BJ (cell line): ENCODE measurements at regions of chr2 and their contacts with region 1.

Region 1: DNA sequence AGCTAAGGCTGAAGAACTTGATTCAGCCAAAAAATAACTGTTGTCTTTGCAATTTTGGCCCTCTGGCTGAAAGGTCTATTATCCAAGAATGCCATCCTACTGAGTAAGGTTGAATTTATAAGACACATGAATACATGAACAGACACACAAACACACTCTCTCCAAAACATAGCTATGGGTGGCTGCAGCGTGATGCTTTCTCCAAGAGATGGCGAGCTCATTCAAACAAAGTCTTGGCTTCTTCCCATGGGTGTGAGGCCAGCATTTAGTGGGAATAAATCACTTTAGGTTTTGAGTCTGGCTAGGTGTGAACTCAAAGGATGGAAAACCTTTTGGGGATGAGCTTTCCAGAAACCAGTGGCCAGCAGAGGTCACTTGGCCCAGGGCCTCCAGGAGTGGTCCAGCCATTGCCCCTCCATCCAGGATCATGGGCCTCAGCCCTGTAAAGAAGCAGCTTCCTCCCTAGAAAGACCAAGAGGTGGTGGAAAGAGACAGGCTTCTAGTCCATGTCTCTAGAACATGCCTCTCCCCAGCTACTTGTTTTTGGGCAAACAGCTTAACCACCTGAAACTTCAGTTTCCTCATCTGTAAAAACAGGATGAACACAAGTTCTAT is 11.0 kb upstream of the OSR1 start:
- DNase-seq: no peak
- H3K4me3 ChIP-seq: no peak overlapping the region
- H3K27me3 ChIP-seq: peaks cover 7% of the 10 kb centered on the region
- CTCF ChIP-seq: peak; percentile 62

Region 2: DNA sequence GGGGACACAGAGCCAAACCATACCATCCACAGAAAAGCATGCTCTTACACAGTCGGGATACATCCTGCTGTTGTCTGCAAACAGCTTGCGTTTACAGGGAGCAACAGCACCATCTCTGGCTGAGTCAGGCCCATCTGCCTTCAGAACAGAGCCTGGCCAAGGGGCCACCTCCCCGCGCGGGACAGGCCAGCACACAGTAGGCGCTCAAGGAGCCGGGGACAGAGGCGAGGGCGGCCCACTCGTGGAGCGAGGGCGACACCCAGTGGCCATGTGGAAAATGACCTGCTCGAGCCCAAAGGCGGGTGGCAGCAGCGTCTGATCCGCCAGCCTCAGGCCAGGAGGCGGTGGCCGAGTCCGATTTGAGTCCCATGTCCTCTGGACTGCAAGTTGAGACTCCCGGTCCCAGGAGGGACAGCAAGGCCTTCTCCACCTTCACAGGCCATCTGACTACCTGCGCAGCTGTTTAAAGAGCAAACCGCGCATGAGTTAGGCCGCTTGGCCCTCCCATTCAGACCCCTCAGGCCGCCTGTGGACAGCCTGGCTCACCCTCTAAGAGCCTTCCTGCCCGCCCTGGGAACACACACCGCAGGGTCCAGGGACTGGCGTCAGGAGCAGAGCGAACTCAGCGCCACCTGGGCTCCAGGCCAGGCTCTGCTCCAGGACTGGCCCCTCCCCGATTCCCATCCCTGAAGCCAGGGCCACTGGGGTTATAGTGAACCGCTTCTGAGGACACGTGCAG is 494.0 kb after region 1 on chr2:
- CTCF ChIA-PET with region 1: interaction called, 35 read pairs
- POLR2A ChIA-PET with region 1: no interaction called
- DNase-seq: no peak
- H3K4me3 ChIP-seq: no peak overlapping the region
- H3K27me3 ChIP-seq: no peaks in the 10 kb centered on the region
- CTCF ChIP-seq: peak; percentile 88